ENCODE measurements at regions of chr17 and their contacts with region 1.

Region 1: GRCh38 chr17:57823469-57824401 is 26.1 kb downstream of the MRPS23 start:
- DNase-seq: no peak
- H3K4me3 Mint-ChIP-seq: no peak overlapping the region
- H3K27ac Mint-ChIP-seq: no peak overlapping the region
- H3K4me1 Mint-ChIP-seq: no peaks in the 10 kb centered on the region
- H3K27me3 Mint-ChIP-seq: peaks cover 4% of the 10 kb centered on the region

Region 2: DNA sequence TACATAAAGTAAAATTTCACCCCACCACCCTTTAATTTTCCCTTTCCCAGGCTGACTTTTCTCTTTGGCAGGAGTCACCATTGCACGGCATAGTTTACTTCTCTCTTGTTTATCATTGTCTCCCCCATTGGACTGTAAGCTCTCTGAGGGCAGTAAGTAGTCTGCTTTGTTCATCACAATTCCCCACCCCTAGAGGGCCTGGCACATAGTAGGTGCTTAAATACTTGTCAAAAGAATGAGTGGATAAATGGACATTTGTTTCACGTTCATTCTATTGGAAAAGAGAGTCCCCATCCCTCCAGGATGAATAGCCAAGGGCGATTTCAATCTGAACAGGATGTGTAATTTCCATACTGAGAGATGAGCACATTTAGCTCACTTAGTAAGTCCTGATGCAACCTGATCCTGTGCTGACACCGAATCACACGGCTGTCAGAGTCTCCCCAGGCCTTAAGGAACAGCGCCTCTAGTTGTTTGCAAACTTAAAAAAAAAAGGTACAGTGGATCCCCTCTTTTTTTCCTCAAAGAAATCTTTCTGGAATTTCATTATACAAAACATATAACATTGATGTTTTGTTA is 684.7 kb before region 1 on chr17:
- intact Hi-C with region 1: loop called (anchors 2 kb)
- DNase-seq: no peak
- H3K4me3 Mint-ChIP-seq: no peak overlapping the region
- H3K27ac Mint-ChIP-seq: no peak overlapping the region
- H3K4me1 Mint-ChIP-seq: peaks cover 12% of the 10 kb centered on the region
- H3K27me3 Mint-ChIP-seq: peaks cover 6% of the 10 kb centered on the region

Measured in activated T-helper 1 cell treated with anti-CD3 and anti-CD28 coated beads, Interleukin-12 subunit alpha, Interleukin-12 subunit beta, Interleukin-2, Interleukin-4 antibody, amounts not matched to agents 30 ng/mL and 10 ng/mL and 1 ng/mL, durations not matched to agents 14 hours and 24 hours and 36 hours (primary cell).